Activated B cell treated with CpG ODN at 0.5 μM for 24 hours (primary cell): ENCODE measurements at regions of chr18 and their contacts with region 1.

Region 1: GRCh38 chr18:45879681-45880655 is 54.5 kb downstream of the SIGLEC15 start:
- DNase-seq: peak; percentile 62
- ATAC-seq: peak; percentile 92
- H3K4me3 Mint-ChIP-seq: no peak overlapping the region
- H3K27ac Mint-ChIP-seq: peak overlapping the region; percentile 41
- H3K4me1 Mint-ChIP-seq: peaks cover 11% of the 10 kb centered on the region
- H3K27me3 Mint-ChIP-seq: no peaks in the 10 kb centered on the region
- CTCF ChIP-seq: peak; percentile 93

Region 2: GRCh38 chr18:45480219-45481015 is 399.6 kb before region 1 on chr18:
- CTCF ChIA-PET with region 1: no interaction called
- POLR2A ChIA-PET with region 1: no interaction called
- intact Hi-C with region 1: no loop called
- DNase-seq: no peak
- ATAC-seq: no peak
- H3K4me3 Mint-ChIP-seq: no peak overlapping the region
- H3K27ac Mint-ChIP-seq: no peak overlapping the region
- H3K4me1 Mint-ChIP-seq: no peaks in the 10 kb centered on the region
- H3K27me3 Mint-ChIP-seq: peaks cover 19% of the 10 kb centered on the region
- CTCF ChIP-seq: no peak

Region 3: GRCh38 chr18:45722899-45723298 is 157.1 kb before region 1 on chr18:
- CTCF ChIA-PET with region 1: interaction called, 54 read pairs
- POLR2A ChIA-PET with region 1: no interaction called
- intact Hi-C with region 1: loop called (anchors 1 kb)
- DNase-seq: peak; percentile 50
- ATAC-seq: peak; percentile 80
- H3K4me3 Mint-ChIP-seq: no peak overlapping the region
- H3K27ac Mint-ChIP-seq: no peak overlapping the region
- H3K4me1 Mint-ChIP-seq: no peaks in the 10 kb centered on the region
- H3K27me3 Mint-ChIP-seq: peaks cover 8% of the 10 kb centered on the region
- CTCF ChIP-seq: no peak

Region 4: GRCh38 chr18:45839414-45840395 is 40.3 kb before region 1 on chr18:
- CTCF ChIA-PET with region 1: interaction called, 3 read pairs
- POLR2A ChIA-PET with region 1: no interaction called
- intact Hi-C with region 1: loop called (anchors 2 kb)
- DNase-seq: no peak
- ATAC-seq: peak; percentile 40
- H3K4me3 Mint-ChIP-seq: no peak overlapping the region
- H3K27ac Mint-ChIP-seq: no peak overlapping the region
- H3K4me1 Mint-ChIP-seq: peaks cover 10% of the 10 kb centered on the region
- H3K27me3 Mint-ChIP-seq: peaks cover 49% of the 10 kb centered on the region
- CTCF ChIP-seq: no peak

Region 5: GRCh38 chr18:45865466-45865865 is 14.5 kb before region 1 on chr18:
- CTCF ChIA-PET with region 1: interaction called, 7 read pairs
- POLR2A ChIA-PET with region 1: no interaction called
- intact Hi-C with region 1: loop called (anchors 2 kb)
- DNase-seq: no peak
- ATAC-seq: no peak
- H3K4me3 Mint-ChIP-seq: no peak overlapping the region
- H3K27ac Mint-ChIP-seq: no peak overlapping the region
- H3K4me1 Mint-ChIP-seq: no peaks in the 10 kb centered on the region
- H3K27me3 Mint-ChIP-seq: no peaks in the 10 kb centered on the region
- CTCF ChIP-seq: no peak